ENCODE measurements at regions of chr2 and their contacts with region 1.

Region 1: DNA sequence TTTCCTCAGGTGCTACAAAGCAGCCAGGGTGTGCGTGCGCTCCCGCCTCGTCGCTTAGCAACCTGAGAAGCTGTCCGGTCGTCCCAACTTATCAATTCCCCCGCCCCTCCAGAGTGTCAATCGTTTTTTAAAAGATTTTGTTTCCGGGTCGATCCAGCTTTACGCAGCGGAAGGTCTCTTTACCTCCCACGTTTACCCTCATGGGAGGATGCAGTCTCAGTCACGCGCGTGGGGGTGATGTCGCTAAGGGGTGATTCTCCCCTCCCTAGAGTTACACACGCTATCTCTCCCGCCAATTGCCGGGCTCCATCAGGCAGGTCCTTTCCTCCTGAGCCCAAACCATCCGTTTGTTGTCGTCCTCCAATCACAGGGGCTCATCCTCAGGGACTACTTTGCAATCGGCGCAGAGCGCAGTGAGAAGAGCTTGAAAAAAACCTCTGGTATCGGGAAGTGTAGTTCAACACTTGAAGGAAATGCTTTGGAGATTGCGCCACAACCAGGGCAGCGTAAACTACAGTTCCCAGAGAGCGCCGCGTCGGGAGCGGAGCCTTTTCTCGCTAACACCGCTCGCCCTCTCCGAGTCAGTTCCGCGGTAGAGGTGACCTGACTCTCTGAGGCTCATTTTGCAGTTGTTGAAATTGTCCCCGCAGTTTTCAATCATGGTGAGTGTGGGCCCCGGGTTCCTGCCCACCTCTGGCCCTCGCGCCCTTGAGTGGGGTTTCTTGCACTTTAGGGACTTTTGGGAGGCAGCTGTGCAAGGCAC is at the starts of genes MDH1 and WDPCP:
- DNase-seq: peak; percentile 99
- H3K4me3 ChIP-seq: peak within 1 kb of the TSS; percentile 84
- H3K27ac ChIP-seq: peak within 1 kb of the TSS; percentile 74
- H3K4me1 ChIP-seq: peaks cover 17% of the 10 kb centered on the region
- H3K27me3 ChIP-seq: no peaks in the 10 kb centered on the region
- CTCF ChIP-seq: no peak
- total RNA-seq, gene MDH1: 178 and 185 TPM in 2 replicates
- total RNA-seq, gene WDPCP: 7.9 and 10.5 TPM in 2 replicates

Region 2: GRCh38 chr2:62415019-62415431 is 1173.5 kb before region 1 on chr2:
- CTCF ChIA-PET with region 1: no interaction called
- POLR2A ChIA-PET with region 1: no interaction called
- intact Hi-C with region 1: no loop called
- DNase-seq: no peak
- H3K4me3 ChIP-seq: no peak overlapping the region
- H3K27ac ChIP-seq: no peak overlapping the region
- H3K4me1 ChIP-seq: no peaks in the 10 kb centered on the region
- H3K27me3 ChIP-seq: no peaks in the 10 kb centered on the region
- CTCF ChIP-seq: no peak

Region 3: GRCh38 chr2:63841254-63842022 is 252.9 kb after region 1 on chr2 and contains the start of gene UGP2:
- CTCF ChIA-PET with region 1: no interaction called
- POLR2A ChIA-PET with region 1: no interaction called
- intact Hi-C with region 1: loop called (anchors 5 kb)
- DNase-seq: peak; percentile 88
- H3K4me3 ChIP-seq: peak within 1 kb of the TSS; percentile 93
- H3K27ac ChIP-seq: peak within 1 kb of the TSS; percentile 90
- H3K4me1 ChIP-seq: peaks cover 12% of the 10 kb centered on the region
- H3K27me3 ChIP-seq: no peaks in the 10 kb centered on the region
- CTCF ChIP-seq: peak; percentile 52
- total RNA-seq, gene UGP2: 60.3 and 70.4 TPM in 2 replicates